ENCODE measurements at regions of chr12 and their contacts with region 1.

Region 1: DNA sequence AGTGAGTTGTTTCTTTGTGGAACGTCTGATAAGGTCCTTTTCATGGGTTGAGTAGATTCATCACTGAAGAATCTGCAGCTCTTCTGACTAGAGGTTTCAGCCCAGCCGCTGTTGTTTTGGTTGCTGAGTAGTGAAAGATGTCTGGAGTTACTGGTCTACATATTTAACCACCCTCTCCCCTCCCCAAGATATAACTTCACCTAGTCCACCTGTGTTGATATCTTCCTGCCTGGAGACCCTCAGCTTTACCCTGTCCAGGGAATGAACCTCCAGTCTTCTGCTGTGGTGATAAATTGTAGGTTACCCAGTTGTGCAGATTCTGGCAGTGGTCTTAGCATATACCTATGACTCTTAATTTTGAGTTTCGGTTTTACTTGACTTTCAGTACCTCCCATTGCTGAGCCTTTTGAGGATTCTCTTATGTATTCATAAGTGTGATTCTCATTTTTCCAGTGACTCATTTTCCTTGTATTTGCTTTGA is 62.9 kb downstream of the CCDC91 start:
- DNase-seq: peak; percentile 18
- H3K4me3 Mint-ChIP-seq: peak overlapping the region; percentile 74
- H3K27ac Mint-ChIP-seq: peak overlapping the region; percentile 97
- H3K4me1 Mint-ChIP-seq: peaks cover 48% of the 10 kb centered on the region
- H3K27me3 Mint-ChIP-seq: no peaks in the 10 kb centered on the region

Region 2: DNA sequence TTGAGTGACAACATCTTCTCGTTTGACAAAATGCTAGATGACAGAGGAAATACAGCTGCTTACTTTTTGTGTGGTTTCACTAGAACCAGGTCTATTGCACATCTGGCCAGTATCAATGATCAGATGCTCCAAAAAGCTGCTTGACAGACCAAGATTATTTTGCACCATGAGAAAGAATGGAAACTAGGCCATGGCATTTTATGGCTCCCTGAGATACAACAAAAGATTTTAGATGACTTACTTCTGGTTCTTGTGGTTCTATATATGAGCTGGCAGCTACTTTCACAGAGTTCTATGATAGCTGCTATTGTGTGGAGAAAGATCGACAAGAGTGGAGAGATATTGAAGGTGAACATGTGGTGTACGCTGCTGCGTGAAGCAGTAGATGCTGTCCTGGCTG is 755.1 kb before region 1 on chr12:
- intact Hi-C with region 1: loop called (anchors 1 kb)
- DNase-seq: peak; percentile 16
- H3K4me3 Mint-ChIP-seq: peak overlapping the region; percentile 3
- H3K27ac Mint-ChIP-seq: peak overlapping the region; percentile 76
- H3K4me1 Mint-ChIP-seq: peaks cover 53% of the 10 kb centered on the region
- H3K27me3 Mint-ChIP-seq: no peaks in the 10 kb centered on the region

Region 3: DNA sequence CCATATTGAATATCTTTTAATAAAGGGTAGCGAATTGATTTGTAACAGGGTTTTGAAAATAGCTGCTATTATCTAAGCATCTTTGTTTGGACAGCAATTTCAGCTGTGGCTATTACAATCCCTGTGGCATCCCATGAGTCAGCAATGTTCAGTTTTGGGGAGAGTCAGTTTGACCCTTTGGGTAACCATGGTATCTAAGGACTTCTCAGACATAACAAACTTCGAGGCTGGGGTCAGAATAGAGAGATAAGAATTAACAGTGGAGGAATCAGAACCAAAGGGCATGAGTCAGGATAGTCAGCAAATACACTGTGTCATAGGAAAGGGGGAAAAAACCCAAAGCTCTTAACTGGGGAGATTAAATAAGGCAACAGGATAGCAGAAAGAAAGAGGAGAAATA is 268.9 kb before region 1 on chr12:
- intact Hi-C with region 1: no loop called
- DNase-seq: no peak
- H3K4me3 Mint-ChIP-seq: no peak overlapping the region
- H3K27ac Mint-ChIP-seq: no peak overlapping the region
- H3K4me1 Mint-ChIP-seq: no peaks in the 10 kb centered on the region
- H3K27me3 Mint-ChIP-seq: peaks cover 11% of the 10 kb centered on the region

Region 4: DNA sequence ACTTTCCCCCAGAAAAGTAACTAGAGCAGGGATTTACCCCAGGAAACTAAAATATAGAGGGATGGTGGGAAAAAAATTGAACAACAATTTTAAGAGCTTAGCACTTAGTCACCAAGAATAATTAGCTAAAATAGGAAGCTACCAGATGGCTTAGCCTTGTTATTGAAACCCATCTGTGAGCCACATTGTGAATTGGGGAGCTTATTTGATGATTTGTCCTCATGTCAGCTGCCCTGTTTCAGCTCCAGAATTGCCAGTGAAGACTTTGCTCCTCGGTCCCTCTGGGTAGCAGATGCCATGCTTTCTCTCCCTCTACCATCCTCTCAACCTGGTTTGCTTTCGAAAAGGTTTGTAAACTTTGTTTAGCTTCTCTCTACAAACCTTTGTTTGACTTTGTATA is 213.0 kb before region 1 on chr12:
- intact Hi-C with region 1: no loop called
- DNase-seq: no peak
- H3K4me3 Mint-ChIP-seq: no peak overlapping the region
- H3K27ac Mint-ChIP-seq: no peak overlapping the region
- H3K4me1 Mint-ChIP-seq: no peaks in the 10 kb centered on the region
- H3K27me3 Mint-ChIP-seq: no peaks in the 10 kb centered on the region

Region 5: GRCh38 chr12:28172434-28173030 is 80.7 kb before region 1 on chr12:
- intact Hi-C with region 1: loop called (anchors 1 kb)
- DNase-seq: no peak
- H3K4me3 Mint-ChIP-seq: no peak overlapping the region
- H3K27ac Mint-ChIP-seq: no peak overlapping the region
- H3K4me1 Mint-ChIP-seq: peaks cover 10% of the 10 kb centered on the region
- H3K27me3 Mint-ChIP-seq: no peaks in the 10 kb centered on the region

Region 6: GRCh38 chr12:28265435-28266042 is 12.3 kb after region 1 on chr12:
- intact Hi-C with region 1: loop called (anchors 1 kb)
- DNase-seq: no peak
- H3K4me3 Mint-ChIP-seq: no peak overlapping the region
- H3K27ac Mint-ChIP-seq: no peak overlapping the region
- H3K4me1 Mint-ChIP-seq: no peaks in the 10 kb centered on the region
- H3K27me3 Mint-ChIP-seq: no peaks in the 10 kb centered on the region

Region 7: DNA sequence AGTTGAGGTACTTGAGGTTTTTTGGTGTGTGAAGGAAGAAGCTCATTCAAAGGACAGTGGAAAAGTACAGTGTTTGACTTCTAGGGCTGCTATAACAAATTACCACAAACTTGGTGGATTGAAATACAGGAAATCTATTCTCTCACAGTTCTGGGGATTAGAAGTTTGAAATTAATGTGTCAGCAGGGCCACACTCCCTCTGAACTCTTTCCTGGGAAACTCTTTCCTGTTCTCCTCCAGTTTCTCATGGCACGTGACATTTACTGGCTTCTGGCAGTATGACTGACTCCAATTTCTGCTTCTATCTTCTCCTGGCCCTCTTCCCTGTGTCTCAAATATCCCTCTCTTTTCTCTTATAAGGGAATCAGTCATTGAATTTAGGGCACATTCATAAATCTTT is 97.3 kb after region 1 on chr12:
- intact Hi-C with region 1: no loop called
- DNase-seq: no peak
- H3K4me3 Mint-ChIP-seq: no peak overlapping the region
- H3K27ac Mint-ChIP-seq: no peak overlapping the region
- H3K4me1 Mint-ChIP-seq: peaks cover 10% of the 10 kb centered on the region
- H3K27me3 Mint-ChIP-seq: no peaks in the 10 kb centered on the region

Region 8: DNA sequence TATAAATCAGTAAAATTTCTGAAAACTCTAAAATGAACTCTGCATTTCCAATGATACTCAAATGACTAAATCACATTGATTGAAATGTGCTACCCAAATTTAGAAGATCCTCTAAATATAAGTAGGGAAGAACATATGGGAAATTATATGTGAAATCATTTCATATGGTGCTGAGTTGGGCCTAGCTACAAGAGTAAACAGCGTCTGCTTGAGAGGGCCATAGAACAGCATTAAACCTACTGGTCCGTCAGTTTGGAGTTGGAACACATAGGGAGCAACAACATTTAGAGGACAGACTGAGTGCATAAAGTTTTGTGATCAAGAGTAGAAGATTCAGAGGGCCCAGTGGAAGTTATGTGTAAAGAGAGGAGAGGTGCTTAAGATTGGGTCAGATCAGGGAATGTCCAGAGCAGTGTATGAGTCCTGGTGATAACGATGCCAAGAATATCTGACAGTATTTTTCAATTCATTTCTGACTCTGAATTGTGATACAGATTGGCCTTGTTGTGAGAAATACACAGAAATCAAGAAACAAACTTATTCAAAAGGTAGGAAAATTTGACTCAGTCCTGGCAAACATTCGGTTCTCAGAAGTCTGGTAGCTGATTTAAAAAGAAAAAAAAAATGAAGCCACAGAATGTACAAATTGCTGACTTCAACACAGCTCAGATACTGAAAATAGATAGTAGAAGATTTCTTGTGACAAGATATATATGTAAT is 299.2 kb after region 1 on chr12:
- intact Hi-C with region 1: loop called (anchors 1 kb)
- DNase-seq: no peak
- H3K4me3 Mint-ChIP-seq: no peak overlapping the region
- H3K27ac Mint-ChIP-seq: peak overlapping the region; percentile 78
- H3K4me1 Mint-ChIP-seq: peaks cover 9% of the 10 kb centered on the region
- H3K27me3 Mint-ChIP-seq: no peaks in the 10 kb centered on the region

Region 9: GRCh38 chr12:28563286-28563685 is 310.1 kb after region 1 on chr12:
- intact Hi-C with region 1: no loop called
- DNase-seq: no peak
- H3K4me3 Mint-ChIP-seq: no peak overlapping the region
- H3K27ac Mint-ChIP-seq: no peak overlapping the region
- H3K4me1 Mint-ChIP-seq: no peaks in the 10 kb centered on the region
- H3K27me3 Mint-ChIP-seq: peaks cover 1% of the 10 kb centered on the region